Head of caudate nucleus (tissue), 42 donors: ENCODE measurements at regions of chr5 and their contacts with region 1.

Region 1: DNA sequence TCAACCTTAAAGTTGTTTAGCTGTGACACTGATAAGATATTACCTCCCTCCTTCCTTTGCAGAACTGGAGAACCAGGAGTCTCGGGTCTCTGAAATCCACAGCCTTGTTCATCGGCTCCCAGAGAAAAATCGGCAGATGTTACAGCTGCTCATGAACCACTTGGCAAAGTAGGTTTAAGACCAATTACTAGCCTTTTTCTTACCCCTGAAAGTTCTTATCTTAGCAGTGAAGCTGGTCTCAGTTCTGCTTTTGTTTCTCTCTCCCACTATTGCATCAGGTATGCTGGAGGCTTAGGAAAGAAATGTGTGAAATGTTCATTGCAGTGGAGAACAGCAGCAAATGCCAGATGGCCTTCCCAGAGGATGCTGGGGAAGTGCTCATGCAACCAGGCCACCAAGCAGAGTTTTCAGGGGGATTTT is 287.4 kb downstream of the ARHGAP26 start:
- DNase-seq: no peak

Region 2: DNA sequence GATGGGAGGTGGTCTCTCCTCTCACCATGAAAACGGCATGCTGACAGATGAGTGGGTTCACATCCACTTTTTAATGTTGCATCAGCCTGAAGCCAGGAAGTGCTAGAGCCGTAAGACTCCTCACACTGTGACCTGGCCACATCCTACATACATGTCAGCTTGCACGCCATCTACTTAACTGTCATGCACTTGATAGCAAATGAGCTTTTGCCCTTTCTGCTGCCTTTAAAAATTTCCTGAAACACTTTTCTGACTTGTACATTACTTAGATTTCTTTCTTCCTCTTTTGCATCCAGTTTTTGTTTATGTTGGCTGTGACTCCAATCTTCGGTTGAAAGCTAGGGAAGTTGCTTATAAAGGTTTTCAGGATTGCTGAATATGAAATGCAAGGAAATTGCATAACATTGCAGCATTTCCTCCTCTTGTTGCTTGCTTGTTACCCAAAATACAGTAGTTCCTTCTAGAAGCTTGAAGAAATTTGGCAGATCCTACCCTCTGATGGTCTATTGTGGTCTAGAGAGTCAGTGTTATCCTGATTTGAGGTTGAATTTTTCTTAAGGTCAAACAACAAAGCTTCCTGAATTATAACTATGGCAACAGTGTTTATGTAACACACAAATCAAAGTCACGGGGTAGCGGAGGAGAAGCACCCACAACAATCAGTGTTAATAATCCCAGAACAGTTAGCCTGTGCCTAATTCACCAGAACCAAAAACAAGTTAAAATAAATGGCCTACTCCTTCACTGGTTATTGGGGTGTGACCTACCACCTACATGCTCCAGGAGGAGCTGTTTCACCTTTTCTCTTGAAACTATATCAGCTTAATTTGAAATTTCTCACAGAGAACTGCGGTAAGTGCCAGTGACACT is 54.9 kb before region 1 on chr5:
- intact Hi-C with region 1: loop called (anchors 2 kb)
- DNase-seq: peak in 6 of 42 donors; percentile 15 to 44 (median 30)

Region 3: GRCh38 chr5:143013176-143013891 is 44.3 kb before region 1 on chr5:
- intact Hi-C with region 1: no loop called
- DNase-seq: no peak

Region 4: DNA sequence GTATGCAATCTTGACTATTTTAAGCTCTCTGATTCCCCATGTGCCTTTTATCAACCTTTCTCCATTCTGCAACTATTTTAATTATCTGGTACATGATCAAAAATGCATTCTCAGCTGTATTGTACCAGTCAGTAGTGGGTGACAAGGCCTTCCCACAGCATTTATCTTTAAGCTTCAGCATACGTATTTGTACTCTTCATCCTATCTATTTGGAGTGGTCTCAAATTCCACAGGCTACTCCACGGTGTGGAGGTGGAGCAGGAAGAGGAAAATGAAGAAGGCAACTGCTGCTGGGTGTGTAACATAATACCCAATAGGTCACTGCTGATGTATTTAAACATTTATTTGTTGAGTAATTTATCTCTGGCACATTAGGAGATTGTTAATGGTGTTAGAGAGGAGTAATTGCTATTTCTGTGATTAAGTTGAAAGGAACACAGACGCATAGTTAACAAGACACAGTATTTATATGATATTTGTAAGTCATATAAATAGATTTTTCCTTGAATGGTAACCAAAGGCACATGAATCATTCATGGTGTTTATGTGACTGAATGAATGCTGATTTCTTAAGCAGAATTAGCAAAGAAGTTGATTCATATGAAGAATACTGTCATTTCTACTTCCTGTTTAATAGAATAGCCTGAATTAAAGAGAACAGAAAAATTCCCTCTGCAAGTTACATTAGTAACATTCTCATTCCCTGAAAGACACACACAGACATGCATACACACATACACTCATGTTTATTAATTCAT is 499.6 kb after region 1 on chr5:
- intact Hi-C with region 1: no loop called
- DNase-seq: no peak